ENCODE measurements at regions of chr6 and their contacts with region 1.

Region 1: GRCh38 chr6:158072083-158072721 is 90.5 kb downstream of the SYNJ2 start:
- DNase-seq: peak; percentile 72
- H3K4me3 ChIP-seq: no peak overlapping the region
- H3K27ac ChIP-seq: no peak overlapping the region
- H3K4me1 ChIP-seq: peaks cover 4% of the 10 kb centered on the region
- H3K27me3 ChIP-seq: no peaks in the 10 kb centered on the region
- CTCF ChIP-seq: peak; percentile 73

Region 2: GRCh38 chr6:157946865-157947532 is 125.2 kb before region 1 on chr6:
- intact Hi-C with region 1: no loop called
- DNase-seq: no peak
- H3K4me3 ChIP-seq: no peak overlapping the region
- H3K27ac ChIP-seq: no peak overlapping the region
- H3K4me1 ChIP-seq: no peaks in the 10 kb centered on the region
- H3K27me3 ChIP-seq: no peaks in the 10 kb centered on the region
- CTCF ChIP-seq: peak; percentile 20

Region 3: GRCh38 chr6:157981395-157982296 is 90.6 kb before region 1 on chr6 and contains the start of gene SYNJ2:
- intact Hi-C with region 1: loop called (anchors 5 kb)
- DNase-seq: peak; percentile 89
- H3K4me3 ChIP-seq: peak within 1 kb of the TSS; percentile 71
- H3K27ac ChIP-seq: peak within 1 kb of the TSS; percentile 73
- H3K4me1 ChIP-seq: no peaks in the 10 kb centered on the region
- H3K27me3 ChIP-seq: no peaks in the 10 kb centered on the region
- CTCF ChIP-seq: peak; percentile 29
- total RNA-seq, gene SYNJ2: 46.0 to 53.5 TPM